H1 (cell line): ENCODE measurements at regions of chr7 and their contacts with region 1.

Region 1: GRCh38 chr7:22438994-22439393 is 61.0 kb downstream of the STEAP1B start:
- DNase-seq: no peak
- H3K4me3 ChIP-seq: no peak overlapping the region
- H3K27ac ChIP-seq: no peak overlapping the region
- H3K4me1 ChIP-seq: peaks cover 0 to 11% (median 8%) of the 10 kb centered on the region in 4 experiments; a peak in 4 of 7 replicates
- H3K27me3 ChIP-seq: no peaks in the 10 kb centered on the region
- CTCF ChIP-seq: no peak
- EP300 ChIP-seq: no peak
- POLR2A ChIP-seq: no peak
- RAD21 ChIP-seq: no peak

Region 2: GRCh38 chr7:22452142-22452959 is 13.4 kb after region 1 on chr7:
- CTCF ChIA-PET with region 1: interaction called, 20 read pairs
- POLR2A ChIA-PET with region 1: no interaction called
- DNase-seq: peak; percentile 25 to 92
- H3K4me3 ChIP-seq: peak overlapping the region; percentile 6 to 48 (median 32); a peak in 5 of 8 replicates
- H3K27ac ChIP-seq: no peak overlapping the region
- H3K4me1 ChIP-seq: peaks cover 2 to 6% (median 2%) of the 10 kb centered on the region in 4 experiments; a peak in 5 of 7 replicates
- H3K27me3 ChIP-seq: no peaks in the 10 kb centered on the region
- CTCF ChIP-seq: peak; percentile 66 to 85 (median 76)
- EP300 ChIP-seq: no peak
- POLR2A ChIP-seq: no peak
- RAD21 ChIP-seq: peak; percentile 74 to 77